Activated T-helper 1 cell treated with anti-CD3 and anti-CD28 coated beads, Interleukin-12 subunit alpha, Interleukin-12 subunit beta, Interleukin-2, Interleukin-4 antibody, amounts not matched to agents 30 ng/mL and 10 ng/mL and 1 ng/mL, durations not matched to agents 14 hours and 24 hours and 36 hours (primary cell): ENCODE measurements at regions of chr14 and their contacts with region 1.

Region 1: DNA sequence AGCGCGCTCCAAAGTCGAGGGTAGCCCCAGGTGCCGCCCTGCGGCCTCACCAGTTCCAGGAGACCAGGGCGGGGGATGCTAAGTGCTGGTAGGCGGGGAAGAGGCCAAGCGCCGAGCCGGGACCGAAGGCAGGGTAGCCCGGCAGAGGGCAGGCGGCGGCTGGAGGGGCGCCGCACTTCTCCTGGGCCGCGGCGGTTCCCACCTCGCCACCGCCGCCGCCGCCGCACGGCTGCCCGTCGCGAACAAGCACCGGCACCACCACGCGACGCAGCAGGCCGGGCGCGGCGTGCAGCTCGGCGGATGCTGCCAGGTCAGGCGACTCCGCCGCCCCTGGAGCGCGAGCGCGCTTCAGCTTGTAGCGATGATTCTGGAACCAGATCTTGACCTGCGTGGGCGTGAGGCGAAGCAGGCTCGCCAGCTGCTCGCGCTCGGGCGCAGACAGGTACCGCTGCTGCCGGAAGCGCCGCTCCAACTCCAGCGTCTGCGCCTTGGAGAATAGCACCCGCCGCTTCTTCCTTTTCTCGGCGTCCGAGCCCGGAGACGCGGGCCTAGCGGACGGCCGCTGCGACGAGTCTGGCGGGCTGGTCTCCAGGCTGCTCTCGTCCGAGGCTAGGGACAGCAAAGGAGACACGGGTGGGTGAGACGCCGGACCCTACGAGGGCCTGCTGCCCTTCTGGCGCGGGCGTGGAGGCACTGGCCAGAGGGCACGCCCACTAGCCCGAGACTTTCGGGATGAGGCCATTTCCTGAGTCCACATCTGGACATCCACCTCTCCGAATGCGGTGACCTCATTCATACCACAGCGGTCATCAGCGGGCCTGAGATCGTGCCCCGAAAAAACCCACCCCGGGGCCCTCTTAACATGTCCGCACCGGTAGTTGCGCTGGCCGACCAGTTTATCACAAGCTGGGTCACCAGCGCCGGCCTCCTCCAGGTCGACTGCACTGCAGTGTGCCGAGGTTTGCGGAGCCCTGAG is 1.3 kb downstream of the NKX2-8 start:
- DNase-seq: no peak
- H3K4me3 Mint-ChIP-seq: no peak overlapping the region
- H3K27ac Mint-ChIP-seq: no peak overlapping the region
- H3K4me1 Mint-ChIP-seq: no peaks in the 10 kb centered on the region
- H3K27me3 Mint-ChIP-seq: peaks cover 54% of the 10 kb centered on the region

Region 2: DNA sequence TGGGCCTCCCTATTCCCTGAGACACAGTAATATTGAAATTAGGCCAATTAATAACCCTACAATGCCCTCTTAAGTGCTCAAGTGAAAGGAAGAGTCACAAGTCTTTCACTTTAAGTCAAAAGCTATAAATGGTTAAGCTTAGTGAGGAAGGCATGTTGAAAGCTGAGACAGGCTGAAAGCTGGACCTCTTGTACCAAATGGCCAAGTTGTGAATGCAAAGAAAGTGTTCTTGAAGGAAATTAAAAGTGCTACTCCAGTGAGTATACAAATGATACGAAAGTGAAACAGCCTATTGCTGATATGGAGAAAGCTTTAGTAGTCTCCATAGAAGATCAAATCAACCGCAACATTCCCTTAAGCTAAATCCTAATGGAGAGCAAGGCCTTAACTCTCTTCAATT is 545.5 kb before region 1 on chr14:
- intact Hi-C with region 1: no loop called
- DNase-seq: no peak
- H3K4me3 Mint-ChIP-seq: no peak overlapping the region
- H3K27ac Mint-ChIP-seq: no peak overlapping the region
- H3K4me1 Mint-ChIP-seq: no peaks in the 10 kb centered on the region
- H3K27me3 Mint-ChIP-seq: no peaks in the 10 kb centered on the region

Region 3: DNA sequence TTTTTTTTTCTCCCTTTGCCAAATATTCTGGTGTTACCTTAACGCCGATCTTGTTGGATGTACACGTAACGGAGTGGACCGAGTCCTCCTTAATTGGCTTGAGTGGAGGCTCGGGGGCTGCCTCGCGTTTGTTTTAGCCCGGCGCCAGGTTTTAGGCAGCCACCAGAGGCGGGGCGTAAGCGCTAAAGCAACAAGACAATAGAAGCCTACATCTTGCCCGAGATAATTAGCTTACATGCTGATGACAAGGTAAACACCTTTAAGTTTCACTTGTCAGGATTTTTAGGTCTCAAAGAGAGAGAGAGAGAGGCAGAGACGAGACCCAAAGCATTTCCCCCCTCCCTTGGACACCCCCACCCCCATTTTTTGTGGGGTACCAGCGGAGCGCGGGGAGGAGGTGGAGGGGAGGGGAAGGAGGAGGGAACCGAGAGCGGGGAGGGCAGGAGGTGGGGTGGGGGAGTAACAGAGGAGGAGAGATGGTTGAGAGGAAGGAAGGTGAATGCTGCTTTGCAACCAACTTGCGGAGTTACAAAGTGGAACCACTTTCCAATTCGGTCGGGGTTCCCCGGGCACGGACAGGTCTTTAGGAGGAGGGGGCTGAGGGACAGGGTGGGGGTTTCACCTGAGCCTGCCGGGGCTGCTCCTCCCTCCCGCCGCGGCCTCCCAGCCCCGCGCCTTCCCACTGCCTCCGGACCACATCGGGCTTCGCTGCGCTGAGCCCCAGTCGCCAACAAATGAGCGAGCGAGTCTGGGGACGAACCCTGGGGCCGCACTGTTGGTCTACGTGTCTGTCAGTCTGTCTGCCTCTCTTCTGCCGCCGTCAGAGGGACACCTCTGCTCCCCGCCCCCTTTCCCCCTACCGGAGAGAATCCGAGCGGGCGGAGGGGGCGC is 61.5 kb before region 1 on chr14 and contains the start of gene NKX2-1:
- intact Hi-C with region 1: loop called (anchors 2 kb)
- DNase-seq: no peak
- H3K4me3 Mint-ChIP-seq: peak within 1 kb of the TSS; percentile 37
- H3K27ac Mint-ChIP-seq: peak within 1 kb of the TSS; percentile 70
- H3K4me1 Mint-ChIP-seq: no peaks in the 10 kb centered on the region
- H3K27me3 Mint-ChIP-seq: peaks cover 65% of the 10 kb centered on the region
- total RNA-seq, gene NKX2-1: not detected in 2 replicates

Region 4: DNA sequence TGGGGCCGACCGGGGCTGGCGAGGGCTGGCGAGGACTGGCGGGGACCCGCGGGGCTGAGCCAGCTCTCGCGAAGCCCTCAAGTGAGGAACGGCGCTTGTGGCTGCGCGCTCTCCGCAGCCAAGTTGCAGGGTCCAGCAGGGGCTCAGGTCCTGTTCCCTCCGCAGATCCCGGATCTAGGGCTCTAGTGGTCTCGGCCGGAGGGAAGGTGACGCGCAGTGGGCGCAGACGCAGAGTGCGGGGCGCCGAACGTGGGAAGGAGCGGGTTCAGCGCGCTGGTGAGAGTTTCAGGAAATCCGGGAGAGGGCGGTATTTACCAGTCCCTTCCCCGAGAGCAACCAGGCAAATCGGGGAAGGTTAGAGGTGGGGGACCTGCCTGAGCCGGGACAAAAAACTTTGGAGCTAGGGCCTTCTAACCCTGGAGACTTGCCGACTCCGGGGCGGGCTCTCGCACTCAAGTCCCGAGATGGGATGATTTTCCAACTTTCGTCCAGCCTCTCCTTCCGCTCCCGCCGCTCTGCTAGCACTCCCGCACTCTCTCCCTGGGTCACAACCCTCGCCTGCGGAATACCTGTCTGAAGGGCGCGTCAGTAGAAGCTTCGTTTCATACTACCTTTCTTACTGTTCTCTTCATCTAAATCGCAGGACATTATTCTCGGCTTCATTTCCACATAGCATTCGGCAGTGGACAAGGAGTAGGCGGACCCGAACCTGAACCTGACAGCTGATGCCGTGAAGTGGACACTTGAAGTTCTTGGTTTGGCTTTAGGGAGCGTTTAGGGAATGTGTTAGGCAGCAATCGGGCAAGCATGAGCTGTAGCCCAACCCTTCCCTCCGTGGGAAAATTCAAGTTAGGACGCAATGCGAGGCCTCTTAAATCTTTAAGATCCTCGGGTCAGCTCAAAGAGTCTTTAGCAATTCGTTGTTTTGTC is 66.9 kb after region 1 on chr14:
- intact Hi-C with region 1: loop called (anchors 2 kb)
- DNase-seq: no peak
- H3K4me3 Mint-ChIP-seq: no peak overlapping the region
- H3K27ac Mint-ChIP-seq: peak overlapping the region; percentile 77
- H3K4me1 Mint-ChIP-seq: no peaks in the 10 kb centered on the region
- H3K27me3 Mint-ChIP-seq: peaks cover 53% of the 10 kb centered on the region

Region 5: GRCh38 chr14:36655963-36656686 is 75.0 kb after region 1 on chr14:
- intact Hi-C with region 1: loop called (anchors 2 kb)
- DNase-seq: no peak
- H3K4me3 Mint-ChIP-seq: no peak overlapping the region
- H3K27ac Mint-ChIP-seq: no peak overlapping the region
- H3K4me1 Mint-ChIP-seq: peaks cover 5% of the 10 kb centered on the region
- H3K27me3 Mint-ChIP-seq: peaks cover 77% of the 10 kb centered on the region

Region 6: GRCh38 chr14:37594238-37594914 is 1013.2 kb after region 1 on chr14:
- intact Hi-C with region 1: loop called (anchors 5 kb)
- DNase-seq: no peak
- H3K4me3 Mint-ChIP-seq: peak overlapping the region; percentile 74
- H3K27ac Mint-ChIP-seq: peak overlapping the region; percentile 73
- H3K4me1 Mint-ChIP-seq: peaks cover 13% of the 10 kb centered on the region
- H3K27me3 Mint-ChIP-seq: peaks cover 72% of the 10 kb centered on the region

Region 7: GRCh38 chr14:38208618-38209562 is 1627.7 kb after region 1 on chr14:
- intact Hi-C with region 1: loop called (anchors 10 kb)
- DNase-seq: no peak
- H3K4me3 Mint-ChIP-seq: no peak overlapping the region
- H3K27ac Mint-ChIP-seq: peak overlapping the region; percentile 23
- H3K4me1 Mint-ChIP-seq: peaks cover 3% of the 10 kb centered on the region
- H3K27me3 Mint-ChIP-seq: peaks cover 52% of the 10 kb centered on the region